Activated T-helper 1 cell treated with anti-CD3 and anti-CD28 coated beads, Interleukin-12 subunit alpha, Interleukin-12 subunit beta, Interleukin-2, Interleukin-4 antibody, amounts not matched to agents 30 ng/mL and 10 ng/mL and 1 ng/mL, durations not matched to agents 14 hours and 24 hours and 36 hours (primary cell): ENCODE measurements at regions of chr1 and their contacts with region 1.

Region 1: GRCh38 chr1:24385160-24385940 is 28.2 kb downstream of the STPG1 start:
- DNase-seq: no peak
- H3K4me3 Mint-ChIP-seq: peak overlapping the region; percentile 38
- H3K27ac Mint-ChIP-seq: peak overlapping the region; percentile 41
- H3K4me1 Mint-ChIP-seq: peaks cover 36% of the 10 kb centered on the region
- H3K27me3 Mint-ChIP-seq: no peaks in the 10 kb centered on the region

Region 2: GRCh38 chr1:24277420-24278169 is 107.8 kb before region 1 on chr1:
- intact Hi-C with region 1: loop called (anchors 1 kb)
- DNase-seq: no peak
- H3K4me3 Mint-ChIP-seq: peak overlapping the region; percentile 43
- H3K27ac Mint-ChIP-seq: peak overlapping the region; percentile 27
- H3K4me1 Mint-ChIP-seq: peaks cover 13% of the 10 kb centered on the region
- H3K27me3 Mint-ChIP-seq: peaks cover 29% of the 10 kb centered on the region

Region 3: DNA sequence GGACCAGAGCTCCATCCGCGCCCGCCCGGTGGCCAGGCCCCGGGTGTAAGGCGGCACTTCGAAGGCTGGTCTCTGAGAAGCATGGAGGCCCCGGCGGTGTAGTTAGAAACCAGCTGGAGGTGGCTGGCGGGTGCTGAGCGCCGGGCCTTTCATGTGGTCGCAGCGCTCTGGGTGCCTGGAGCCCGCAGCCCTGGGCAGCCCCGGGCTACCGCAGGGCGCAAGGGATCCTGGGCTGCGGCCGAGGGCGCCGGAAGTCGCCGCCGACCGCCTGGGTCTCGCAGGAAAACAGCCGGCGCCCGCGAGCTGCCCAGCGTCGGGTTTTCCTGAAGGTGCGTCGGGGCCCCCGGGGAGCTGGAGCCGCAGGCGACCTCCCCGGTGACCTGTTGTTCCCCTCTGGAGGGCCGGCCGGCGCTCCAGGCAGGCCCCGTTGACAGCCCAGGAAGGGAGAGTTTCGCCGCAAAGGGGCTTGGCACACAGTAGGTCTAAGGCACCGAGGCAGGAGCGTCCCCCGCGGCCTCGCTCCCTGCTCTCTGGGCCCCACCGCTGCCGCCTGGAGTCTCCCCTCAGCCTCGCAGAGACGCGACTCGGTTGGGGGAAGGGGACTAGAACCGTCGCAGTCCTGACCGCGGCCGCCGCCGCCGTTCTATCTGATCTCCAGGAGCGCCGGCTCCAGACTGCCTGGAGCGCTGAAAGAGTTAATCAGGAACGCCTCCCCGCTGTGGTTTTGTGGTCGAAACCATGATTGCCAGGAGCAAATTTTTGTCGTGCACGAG is 63.5 kb before region 1 on chr1:
- intact Hi-C with region 1: loop called (anchors 1 kb)
- DNase-seq: peak; percentile 71
- H3K4me3 Mint-ChIP-seq: peak overlapping the region; percentile 65
- H3K27ac Mint-ChIP-seq: peak overlapping the region; percentile 71
- H3K4me1 Mint-ChIP-seq: peaks cover 48% of the 10 kb centered on the region
- H3K27me3 Mint-ChIP-seq: peaks cover 94% of the 10 kb centered on the region

Region 4: DNA sequence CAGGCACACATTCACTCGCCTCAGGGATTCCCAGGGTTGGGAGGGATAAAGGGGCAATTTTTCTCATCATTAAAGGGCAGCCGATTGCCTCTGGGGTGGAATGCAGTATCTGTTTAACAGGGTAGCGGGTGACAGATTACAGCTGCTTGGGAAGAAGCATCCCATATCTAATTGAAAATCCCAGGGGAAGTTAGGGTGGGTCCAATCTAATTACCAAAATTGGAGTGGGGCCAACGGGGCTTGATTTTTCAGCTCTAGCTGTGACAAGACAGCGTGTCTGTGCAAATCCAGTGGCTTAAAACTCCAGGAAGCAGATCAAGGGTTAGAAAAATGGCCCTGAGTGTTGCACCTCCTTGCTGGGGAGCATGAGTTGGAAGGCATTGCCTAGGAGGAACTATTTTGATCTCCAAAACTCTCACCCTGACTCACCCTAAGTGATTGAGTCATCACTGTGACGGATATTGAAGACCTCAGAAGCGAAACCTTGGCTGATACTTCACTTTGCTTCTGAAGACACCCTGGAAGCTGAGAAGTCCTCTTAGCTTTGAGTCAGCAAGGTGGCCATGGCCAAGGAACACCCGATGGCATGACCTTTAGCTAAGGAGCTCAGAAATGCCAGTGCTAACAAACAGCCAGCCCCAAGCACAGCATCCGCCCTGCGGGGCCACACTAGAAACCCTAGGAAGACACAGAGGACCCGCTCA is 20.2 kb before region 1 on chr1:
- intact Hi-C with region 1: loop called (anchors 1 kb)
- DNase-seq: peak; percentile 38
- H3K4me3 Mint-ChIP-seq: peak overlapping the region; percentile 39
- H3K27ac Mint-ChIP-seq: peak overlapping the region; percentile 73
- H3K4me1 Mint-ChIP-seq: peaks cover 40% of the 10 kb centered on the region
- H3K27me3 Mint-ChIP-seq: no peaks in the 10 kb centered on the region